ENCODE measurements at regions of chr10 and their contacts with region 1.

Region 1: DNA sequence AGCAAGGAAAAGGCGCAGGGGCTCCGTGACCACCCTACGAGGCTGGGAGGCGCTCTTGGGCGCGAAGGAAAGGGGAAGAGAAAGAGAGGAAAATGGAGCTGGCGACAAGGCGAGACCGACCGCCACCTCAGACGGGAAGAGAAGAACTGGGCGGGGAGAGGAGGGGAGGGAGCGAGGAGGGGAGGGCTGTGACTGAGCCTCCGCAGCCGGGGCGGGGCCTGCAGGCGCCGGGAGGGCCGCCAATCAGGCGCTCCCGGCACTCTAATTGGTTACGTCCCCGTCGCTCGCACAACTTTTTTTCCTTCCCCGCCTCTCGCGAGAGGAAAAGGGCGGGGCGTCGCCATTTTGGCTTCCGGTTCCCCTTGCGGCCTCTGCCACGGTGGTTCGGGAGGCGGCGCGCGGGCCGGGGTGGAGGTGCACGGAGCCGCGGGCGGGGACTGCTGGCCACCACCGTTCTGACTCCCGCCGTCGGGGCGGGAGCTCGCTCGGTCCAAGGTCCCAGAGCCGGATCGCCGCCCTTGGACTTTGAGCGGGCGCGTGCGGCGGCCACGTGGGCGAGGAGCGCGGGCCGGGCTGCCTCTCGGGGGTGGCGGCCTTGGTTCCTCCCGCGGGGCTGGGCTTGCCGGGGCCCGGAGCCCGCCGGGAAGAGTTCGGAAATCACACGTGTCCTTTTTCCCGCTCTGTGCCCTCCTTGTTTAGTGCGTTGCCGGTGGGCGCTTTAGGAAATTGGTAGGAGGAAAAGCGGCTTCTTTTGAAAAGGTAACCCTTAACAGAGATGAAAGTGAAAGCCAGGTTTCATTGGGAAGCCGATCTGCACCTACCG is at the start of gene GDI2:
- DNase-seq: peak; percentile 94 to 98 (median 96)
- H3K4me3 ChIP-seq: peak within 1 kb of the TSS; percentile 90
- H3K4me3 Mint-ChIP-seq: peak within 1 kb of the TSS; percentile 86 to 99 (median 90)
- H3K27ac ChIP-seq: peak within 1 kb of the TSS; percentile 96
- H3K27ac Mint-ChIP-seq: peak within 1 kb of the TSS; percentile 93 to 99 (median 97)
- H3K4me1 ChIP-seq: peaks cover 51% of the 10 kb centered on the region
- H3K4me1 Mint-ChIP-seq: peaks cover 56 to 62% (median 60%) of the 10 kb centered on the region in 3 donors
- H3K27me3 ChIP-seq: no peaks in the 10 kb centered on the region
- H3K27me3 Mint-ChIP-seq: no peaks in the 10 kb centered on the region
- total RNA-seq, gene GDI2: 311 to 319 TPM

Region 2: DNA sequence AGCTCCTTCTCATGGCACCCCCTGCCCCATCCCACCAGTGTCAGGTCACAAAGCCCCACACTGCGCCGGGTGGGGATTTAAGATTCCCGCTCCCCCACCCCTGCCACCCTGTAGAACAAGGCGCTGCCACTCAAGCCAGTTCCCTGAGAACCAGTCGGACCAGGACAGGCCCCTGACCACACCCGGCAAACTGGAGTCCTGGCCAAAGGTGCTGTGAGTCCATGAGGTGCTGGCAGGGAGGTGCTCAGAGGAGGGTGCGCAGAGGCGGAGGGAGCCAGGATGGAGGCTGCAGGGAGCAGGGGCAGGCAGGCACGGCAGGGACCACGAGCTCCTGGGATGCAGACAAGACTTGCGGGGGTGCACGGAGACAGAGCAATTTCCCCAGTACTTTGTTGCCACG is 19.4 kb after region 1 on chr10:
- CTCF ChIA-PET with region 1: no interaction called
- POLR2A ChIA-PET with region 1: no interaction called
- DNase-seq: no peak
- H3K4me3 ChIP-seq: no peak overlapping the region
- H3K4me3 Mint-ChIP-seq: no peak overlapping the region
- H3K27ac ChIP-seq: no peak overlapping the region
- H3K27ac Mint-ChIP-seq: no peak overlapping the region
- H3K4me1 ChIP-seq: no peaks in the 10 kb centered on the region
- H3K4me1 Mint-ChIP-seq: no peaks in the 10 kb centered on the region
- H3K27me3 ChIP-seq: no peaks in the 10 kb centered on the region
- H3K27me3 Mint-ChIP-seq: peaks cover 0 to 1% of the 10 kb centered on the region in 2 donors

Region 3: GRCh38 chr10:5889624-5890451 is 76.3 kb after region 1 on chr10 and contains the starts of genes ANKRD16 and FBH1:
- CTCF ChIA-PET with region 1: interaction called, 6 read pairs
- POLR2A ChIA-PET with region 1: interaction called, 16 read pairs
- DNase-seq: peak; percentile 96 to 97 (median 97)
- H3K4me3 ChIP-seq: peak within 1 kb of the TSS; percentile 66
- H3K4me3 Mint-ChIP-seq: peak within 1 kb of the TSS; percentile 89 to 97 (median 91)
- H3K27ac ChIP-seq: peak within 1 kb of the TSS; percentile 53
- H3K27ac Mint-ChIP-seq: peak within 1 kb of the TSS; percentile 70 to 96 (median 86)
- H3K4me1 ChIP-seq: peaks cover 42% of the 10 kb centered on the region
- H3K4me1 Mint-ChIP-seq: peaks cover 41 to 57% (median 53%) of the 10 kb centered on the region in 3 donors
- H3K27me3 ChIP-seq: no peaks in the 10 kb centered on the region
- H3K27me3 Mint-ChIP-seq: no peaks in the 10 kb centered on the region
- total RNA-seq, gene ANKRD16: 7.2 to 8.5 TPM
- total RNA-seq, gene FBH1: 58.7 to 59.3 TPM

Measured in CD8-positive, alpha-beta memory T cell (primary cell).